ENCODE measurements at regions of chr7 and their contacts with region 1.

Region 1: DNA sequence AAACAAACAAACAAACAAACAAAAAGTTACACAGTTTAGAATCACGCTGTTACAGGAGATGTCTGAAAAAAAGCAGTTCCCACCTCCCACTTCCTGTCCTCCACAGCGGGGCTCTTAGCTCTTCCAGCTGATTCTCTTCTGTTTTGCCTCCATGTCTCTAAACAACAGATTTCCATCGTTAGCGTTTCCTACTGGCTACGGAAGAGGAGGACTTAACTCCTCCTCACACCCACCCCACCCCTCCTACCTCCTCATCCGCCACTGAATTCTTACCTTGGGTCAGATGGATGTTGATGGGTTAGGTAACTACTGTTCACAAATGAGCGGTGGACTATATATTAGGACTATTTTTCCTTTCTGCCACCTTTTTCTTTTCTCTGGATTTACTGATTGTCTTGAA is 36.8 kb upstream of the NUB1 start:
- DNase-seq: no peak

Region 2: GRCh38 chr7:151168003-151168786 is 136.7 kb before region 1 on chr7:
- in situ Hi-C with region 1: loop called (anchors 10 kb)
- DNase-seq: peak; percentile 47

Region 3: GRCh38 chr7:151226875-151227782 is 77.7 kb before region 1 on chr7 and contains the start of gene ABCF2:
- in situ Hi-C with region 1: no loop called
- DNase-seq: peak; percentile 100
- total RNA-seq, gene ABCF2: 93.5 and 94.6 TPM in 2 replicates

Region 4: DNA sequence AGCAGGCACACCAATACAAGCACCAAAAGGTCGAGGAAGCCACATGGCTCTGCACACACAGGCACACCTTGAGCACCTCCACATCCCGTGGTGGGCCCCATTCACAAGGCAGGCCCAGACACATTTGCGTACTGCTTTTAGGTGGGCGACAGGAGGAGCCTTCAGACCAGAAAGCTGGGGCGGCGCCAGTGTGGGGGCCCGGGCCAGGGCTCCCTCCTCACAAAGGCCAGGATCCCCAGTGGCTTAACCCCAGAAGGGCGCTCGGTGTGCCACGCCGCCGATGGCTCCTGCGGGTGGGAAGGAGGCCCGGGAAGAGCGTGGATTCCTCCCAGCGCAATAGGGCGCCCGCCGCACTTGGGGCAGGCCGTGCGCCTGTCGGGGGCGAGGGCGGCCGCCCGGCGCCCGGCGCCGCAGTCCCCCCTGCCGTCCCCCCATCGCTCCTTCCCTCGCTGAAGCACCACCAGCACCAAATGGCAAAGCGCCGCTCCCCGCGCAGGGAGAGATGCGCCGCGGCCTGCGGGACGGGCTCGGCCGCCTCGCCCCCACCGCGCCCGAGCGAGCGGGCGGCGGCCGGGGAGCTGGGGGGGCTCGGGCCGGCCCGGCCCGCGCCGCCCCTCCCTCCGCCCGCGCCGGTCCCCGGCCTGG is 53.4 kb before region 1 on chr7:
- in situ Hi-C with region 1: loop called (anchors 10 kb)
- DNase-seq: peak; percentile 53

Measured in SK-MEL-5 (cell line).